GM12878 (cell line): ENCODE measurements at regions of chr9 and their contacts with region 1.

Region 1: GRCh38 chr9:97900738-97901565 is 21.3 kb downstream of the TRMO start:
- DNase-seq: no peak
- ATAC-seq: peak; percentile 61
- H3K4me3 ChIP-seq: no peak overlapping the region
- H3K27ac ChIP-seq: no peak overlapping the region
- H3K4me1 ChIP-seq: peaks cover 5% of the 10 kb centered on the region; the same call in 1 of the 2 replicates
- H3K27me3 ChIP-seq: no peaks in the 10 kb centered on the region
- CTCF ChIP-seq: peak; percentile 76 to 79 (median 78)
- EP300 ChIP-seq: no peak
- POLR2A ChIP-seq: no peak
- RAD21 ChIP-seq: peak; percentile 76

Region 2: GRCh38 chr9:97703437-97704344 is 197.3 kb before region 1 on chr9:
- CTCF ChIA-PET with region 1: interaction called, 50 read pairs
- POLR2A ChIA-PET with region 1: interaction called, 3 read pairs
- RAD21 ChIA-PET with region 1: interaction called, 3 read pairs
- SMC1A ChIA-PET with region 1: interaction called, 9 read pairs
- in situ Hi-C with region 1: loop called (anchors 5 kb)
- intact Hi-C with region 1: no loop called
- DNase-seq: peak; percentile 51
- ATAC-seq: peak; percentile 86
- H3K4me3 ChIP-seq: no peak overlapping the region
- H3K27ac ChIP-seq: peak overlapping the region; percentile 26; the same call in 1 of the 2 replicates
- H3K4me1 ChIP-seq: peaks cover 9% of the 10 kb centered on the region; the same call in 1 of the 2 replicates
- H3K27me3 ChIP-seq: peaks cover 1 to 2% of the 10 kb centered on the region in 2 experiments; a peak in 1 of 4 replicates
- CTCF ChIP-seq: no peak
- EP300 ChIP-seq: no peak
- POLR2A ChIP-seq: no peak
- RAD21 ChIP-seq: no peak

Region 3: GRCh38 chr9:97710356-97711222 is 190.4 kb before region 1 on chr9:
- CTCF ChIA-PET with region 1: interaction called, 50 read pairs
- POLR2A ChIA-PET with region 1: no interaction called
- RAD21 ChIA-PET with region 1: interaction called, 11 read pairs
- SMC1A ChIA-PET with region 1: interaction called, 9 read pairs
- in situ Hi-C with region 1: loop called (anchors 5 kb)
- intact Hi-C with region 1: loop called (anchors 1 kb)
- DNase-seq: no peak
- ATAC-seq: peak; percentile 96
- H3K4me3 ChIP-seq: no peak overlapping the region
- H3K27ac ChIP-seq: no peak overlapping the region
- H3K4me1 ChIP-seq: peaks cover 5% of the 10 kb centered on the region
- H3K27me3 ChIP-seq: peaks cover 1 to 2% of the 10 kb centered on the region in 2 experiments; a peak in 1 of 4 replicates
- CTCF ChIP-seq: peak; percentile 72 to 85 (median 85)
- EP300 ChIP-seq: no peak
- POLR2A ChIP-seq: no peak
- RAD21 ChIP-seq: peak; percentile 85

Region 4: DNA sequence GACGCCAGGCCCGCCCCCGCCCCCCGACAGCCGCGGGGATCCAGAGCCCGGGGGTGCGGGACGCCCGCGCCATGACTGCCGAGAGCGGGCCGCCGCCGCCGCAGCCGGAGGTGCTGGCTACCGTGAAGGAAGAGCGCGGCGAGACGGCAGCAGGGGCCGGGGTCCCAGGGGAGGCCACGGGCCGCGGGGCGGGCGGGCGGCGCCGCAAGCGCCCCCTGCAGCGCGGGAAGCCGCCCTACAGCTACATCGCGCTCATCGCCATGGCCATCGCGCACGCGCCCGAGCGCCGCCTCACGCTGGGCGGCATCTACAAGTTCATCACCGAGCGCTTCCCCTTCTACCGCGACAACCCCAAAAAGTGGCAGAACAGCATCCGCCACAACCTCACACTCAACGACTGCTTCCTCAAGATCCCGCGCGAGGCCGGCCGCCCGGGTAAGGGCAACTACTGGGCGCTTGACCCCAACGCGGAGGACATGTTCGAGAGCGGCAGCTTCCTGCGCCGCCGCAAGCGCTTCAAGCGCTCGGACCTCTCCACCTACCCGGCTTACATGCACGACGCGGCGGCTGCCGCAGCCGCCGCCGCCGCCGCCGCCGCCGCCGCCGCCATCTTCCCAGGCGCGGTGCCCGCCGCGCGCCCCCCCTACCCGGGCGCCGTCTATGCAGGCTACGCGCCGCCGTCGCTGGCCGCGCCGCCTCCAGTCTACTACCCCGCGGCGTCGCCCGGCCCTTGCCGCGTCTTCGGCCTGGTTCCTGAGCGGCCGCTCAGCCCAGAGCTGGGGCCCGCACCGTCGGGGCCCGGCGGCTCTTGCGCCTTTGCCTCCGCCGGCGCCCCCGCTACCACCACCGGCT is 46.9 kb before region 1 on chr9:
- CTCF ChIA-PET with region 1: no interaction called
- POLR2A ChIA-PET with region 1: no interaction called
- RAD21 ChIA-PET with region 1: no interaction called
- SMC1A ChIA-PET with region 1: no interaction called
- in situ Hi-C with region 1: no loop called
- intact Hi-C with region 1: no loop called
- DNase-seq: no peak
- ATAC-seq: no peak
- H3K4me3 ChIP-seq: no peak overlapping the region
- H3K27ac ChIP-seq: no peak overlapping the region
- H3K4me1 ChIP-seq: no peaks in the 10 kb centered on the region
- H3K27me3 ChIP-seq: peaks cover 25 to 52% of the 10 kb centered on the region in 2 experiments
- CTCF ChIP-seq: 0 out of 6 replicates have a peak, but pooled peaks of 1 of the 3 experiments have one; percentile 3
- EP300 ChIP-seq: no peak
- POLR2A ChIP-seq: no peak
- RAD21 ChIP-seq: no peak

Region 5: DNA sequence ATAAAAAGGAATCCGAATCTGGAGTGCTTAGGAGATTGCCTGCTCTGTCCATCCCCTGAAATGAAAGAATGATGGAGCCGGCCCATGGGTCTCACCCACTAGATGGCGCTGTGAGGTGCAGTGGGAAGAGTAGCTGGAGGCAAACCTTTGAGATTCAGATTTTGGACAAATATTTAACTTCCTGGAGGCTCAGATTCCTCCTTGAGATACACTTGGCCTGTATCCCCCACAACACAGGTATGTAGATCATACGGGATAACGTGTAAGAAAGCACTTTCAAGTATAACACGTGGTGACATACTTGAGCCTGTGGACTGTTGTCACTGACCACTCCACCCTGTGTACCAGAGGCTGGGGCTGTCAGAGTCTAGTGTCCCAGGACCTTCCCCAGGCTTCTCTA is 10.9 kb before region 1 on chr9:
- CTCF ChIA-PET with region 1: interaction called, 95 read pairs
- POLR2A ChIA-PET with region 1: no interaction called
- RAD21 ChIA-PET with region 1: interaction called, 5 read pairs
- SMC1A ChIA-PET with region 1: interaction called, 32 read pairs
- in situ Hi-C with region 1: no loop called
- intact Hi-C with region 1: no loop called
- DNase-seq: no peak
- ATAC-seq: peak; percentile 86
- H3K4me3 ChIP-seq: no peak overlapping the region
- H3K27ac ChIP-seq: no peak overlapping the region
- H3K4me1 ChIP-seq: no peaks in the 10 kb centered on the region
- H3K27me3 ChIP-seq: no peaks in the 10 kb centered on the region
- CTCF ChIP-seq: peak; percentile 59 to 88 (median 83)
- EP300 ChIP-seq: no peak
- POLR2A ChIP-seq: no peak
- RAD21 ChIP-seq: peak; percentile 51

Region 6: GRCh38 chr9:97911970-97912369 is 11.0 kb after region 1 on chr9:
- CTCF ChIA-PET with region 1: interaction called, 30 read pairs
- POLR2A ChIA-PET with region 1: no interaction called
- RAD21 ChIA-PET with region 1: no interaction called
- SMC1A ChIA-PET with region 1: interaction called, 8 read pairs
- in situ Hi-C with region 1: no loop called
- intact Hi-C with region 1: no loop called
- DNase-seq: no peak
- ATAC-seq: no peak
- H3K4me3 ChIP-seq: no peak overlapping the region
- H3K27ac ChIP-seq: no peak overlapping the region
- H3K4me1 ChIP-seq: peaks cover 3% of the 10 kb centered on the region; the same call in 1 of the 2 replicates
- H3K27me3 ChIP-seq: no peaks in the 10 kb centered on the region
- CTCF ChIP-seq: no peak
- EP300 ChIP-seq: no peak
- POLR2A ChIP-seq: no peak
- RAD21 ChIP-seq: no peak